IMR-90 (cell line): ENCODE measurements at regions of chr3 and their contacts with region 1.

Region 1: GRCh38 chr3:37945807-37946530 is 44.6 kb upstream of the VILL start:
- DNase-seq: peak; percentile 67
- ATAC-seq: peak; percentile 83
- H3K4me3 ChIP-seq: no peak overlapping the region
- H3K27ac ChIP-seq: peak overlapping the region; percentile 96
- H3K4me1 ChIP-seq: peaks cover 30% of the 10 kb centered on the region
- H3K27me3 ChIP-seq: no peaks in the 10 kb centered on the region
- CTCF ChIP-seq: no peak
- POLR2A ChIP-seq: no peak
- RAD21 ChIP-seq: no peak

Region 2: DNA sequence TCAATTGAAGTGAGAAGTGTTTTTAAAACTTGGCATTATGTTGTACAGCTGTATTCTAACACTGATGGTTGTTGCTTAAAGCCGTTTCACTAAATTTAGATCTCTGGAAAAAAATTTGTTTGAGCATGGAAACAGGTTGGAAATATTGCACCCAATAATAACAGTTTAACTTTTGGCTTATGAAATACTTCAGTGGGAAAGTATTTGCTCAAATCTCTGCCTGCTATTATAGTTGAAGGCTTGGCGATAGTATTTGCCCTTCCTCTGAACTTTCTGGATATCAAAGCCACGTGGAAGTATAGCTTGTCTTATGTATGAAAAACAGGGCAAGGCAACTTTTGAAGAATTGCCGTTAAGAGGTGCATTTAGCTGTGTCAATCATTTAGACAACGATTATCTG is 501.3 kb before region 1 on chr3:
- CTCF ChIA-PET with region 1: no interaction called
- POLR2A ChIA-PET with region 1: no interaction called
- dilution Hi-C with region 1: no loop called
- in situ Hi-C with region 1: no loop called
- intact Hi-C with region 1: loop called (anchors 5 kb)
- DNase-seq: no peak
- ATAC-seq: no peak
- H3K4me3 ChIP-seq: no peak overlapping the region
- H3K27ac ChIP-seq: no peak overlapping the region
- H3K4me1 ChIP-seq: no peaks in the 10 kb centered on the region
- H3K27me3 ChIP-seq: peaks cover 37% of the 10 kb centered on the region
- CTCF ChIP-seq: no peak
- POLR2A ChIP-seq: no peak
- RAD21 ChIP-seq: no peak